ENCODE measurements at regions of chr12 and their contacts with region 1.

Region 1: DNA sequence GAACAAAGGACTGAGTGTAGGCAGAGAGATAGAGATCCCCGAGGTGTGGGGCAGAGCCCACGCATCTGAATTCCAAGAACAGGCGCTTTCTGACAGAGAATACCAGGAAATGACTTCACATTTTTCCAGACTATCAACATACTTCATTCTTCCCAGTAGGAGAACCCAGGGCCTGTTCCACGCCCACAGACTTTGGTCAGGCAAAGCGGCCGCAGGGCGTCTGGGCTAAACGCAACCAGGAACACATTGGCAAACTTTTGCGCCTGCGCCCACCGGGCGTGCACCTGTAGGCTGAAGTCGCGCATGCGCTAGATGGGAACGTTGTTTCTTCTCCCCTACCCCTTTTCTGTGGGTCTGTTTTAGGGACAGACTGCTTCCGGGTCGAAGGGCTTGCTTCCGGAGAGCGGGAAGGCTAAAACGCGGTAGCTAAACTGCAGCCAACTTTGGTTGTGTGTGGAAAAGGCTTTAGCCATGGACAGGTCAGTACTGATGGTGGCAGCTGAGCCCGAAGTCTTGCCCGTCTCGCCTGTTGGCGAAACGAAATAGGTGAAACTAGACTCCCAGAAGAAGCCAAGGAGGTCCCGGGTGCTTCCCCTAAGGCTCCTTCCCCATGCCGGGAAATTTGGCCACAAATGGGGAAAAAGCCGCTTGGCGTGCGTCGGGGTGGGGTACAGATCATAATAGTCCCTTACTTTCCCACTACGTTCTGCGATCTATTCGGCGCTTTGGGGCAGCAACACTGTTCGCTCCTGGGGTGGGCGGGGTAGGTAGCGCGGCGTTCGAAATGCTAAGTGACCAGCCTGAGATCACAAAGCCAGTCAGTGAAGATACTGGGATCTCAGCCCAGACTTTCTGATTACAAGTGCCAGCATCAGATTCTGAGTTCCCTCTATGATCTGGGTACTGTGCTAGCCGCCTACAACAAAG is at the start of gene NUP107:
- DNase-seq: peak; percentile 94
- H3K4me3 Mint-ChIP-seq: peak within 1 kb of the TSS; percentile 93
- H3K27ac Mint-ChIP-seq: peak within 1 kb of the TSS; percentile 93
- H3K4me1 Mint-ChIP-seq: peaks cover 31% of the 10 kb centered on the region
- H3K27me3 Mint-ChIP-seq: no peaks in the 10 kb centered on the region
- total RNA-seq, gene NUP107: 101 and 106 TPM in 2 replicates

Region 2: DNA sequence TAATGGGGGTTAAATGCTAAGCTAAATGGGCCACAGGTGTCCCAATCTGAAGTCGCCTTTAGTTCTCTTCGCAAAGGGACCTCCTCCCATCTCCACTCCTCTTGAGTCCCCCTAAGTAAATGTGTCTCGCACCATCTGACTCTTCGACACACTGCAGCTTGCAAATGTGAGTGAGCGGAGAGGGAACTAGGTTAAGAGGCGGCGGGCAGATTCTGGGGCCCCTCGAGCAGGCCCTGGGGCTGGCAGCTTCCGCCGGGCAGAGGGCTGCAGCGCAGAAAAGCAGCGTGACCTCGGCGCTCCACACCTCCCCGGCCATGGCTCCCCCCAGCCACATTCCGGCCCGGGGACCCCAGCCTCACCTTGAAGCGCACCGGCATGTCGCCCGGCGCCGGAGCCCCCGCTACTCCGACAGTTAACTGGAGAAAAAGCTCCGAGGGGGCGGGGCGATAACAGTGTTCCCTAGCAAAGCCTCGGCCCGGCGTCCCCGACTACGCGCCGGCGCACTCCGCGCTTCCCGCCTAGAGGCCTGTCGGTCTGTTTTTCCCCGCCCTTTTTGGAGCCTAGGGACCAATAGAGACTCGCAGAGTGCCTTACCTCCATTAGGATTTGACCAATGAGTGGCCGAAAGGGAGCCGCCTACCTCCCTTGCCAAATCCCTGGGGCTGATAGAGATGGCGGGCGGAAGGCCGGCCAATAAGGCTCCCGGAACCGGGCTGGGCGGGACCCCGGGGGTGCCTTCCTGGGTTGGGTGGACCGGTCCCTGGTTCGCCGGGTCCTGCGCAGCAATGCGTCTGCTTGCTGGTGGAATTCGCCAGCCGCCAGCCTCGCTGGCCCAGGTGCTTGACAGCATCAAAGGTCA is 354.8 kb before region 1 on chr12 and contains the start of gene MDM1:
- intact Hi-C with region 1: loop called (anchors 2 kb)
- DNase-seq: peak; percentile 95
- H3K4me3 Mint-ChIP-seq: peak within 1 kb of the TSS; percentile 87
- H3K27ac Mint-ChIP-seq: peak within 1 kb of the TSS; percentile 36
- H3K4me1 Mint-ChIP-seq: peaks cover 29% of the 10 kb centered on the region
- H3K27me3 Mint-ChIP-seq: peaks cover 7% of the 10 kb centered on the region
- total RNA-seq, gene MDM1: 13.1 and 14.8 TPM in 2 replicates

Region 3: GRCh38 chr12:68364893-68365725 is 321.7 kb before region 1 on chr12:
- intact Hi-C with region 1: loop called (anchors 1 kb)
- DNase-seq: peak; percentile 85
- H3K4me3 Mint-ChIP-seq: peak overlapping the region; percentile 61
- H3K27ac Mint-ChIP-seq: peak overlapping the region; percentile 84
- H3K4me1 Mint-ChIP-seq: peaks cover 42% of the 10 kb centered on the region
- H3K27me3 Mint-ChIP-seq: no peaks in the 10 kb centered on the region

Region 4: DNA sequence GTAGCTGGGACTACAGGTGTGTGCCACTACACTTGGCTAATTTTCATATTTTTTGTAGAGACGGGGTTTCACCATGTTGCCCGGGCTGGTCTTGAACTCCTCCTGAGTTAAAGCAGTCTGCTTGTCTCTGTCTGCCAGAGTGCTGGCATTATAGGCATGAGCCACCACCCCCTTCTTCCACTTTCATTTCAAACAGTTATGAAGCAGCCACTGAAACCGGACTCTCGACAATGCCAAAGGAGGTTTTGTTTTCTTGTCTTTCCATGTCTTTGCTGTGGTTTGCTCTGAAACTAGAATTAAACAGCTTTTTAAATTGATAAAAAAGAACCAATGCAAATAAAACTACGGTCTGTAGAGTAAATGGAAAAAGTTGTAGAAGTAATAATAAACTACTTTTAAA is 45.7 kb before region 1 on chr12:
- intact Hi-C with region 1: loop called (anchors 5 kb)
- DNase-seq: peak; percentile 48
- H3K4me3 Mint-ChIP-seq: peak overlapping the region; percentile 6
- H3K27ac Mint-ChIP-seq: peak overlapping the region; percentile 28
- H3K4me1 Mint-ChIP-seq: peaks cover 57% of the 10 kb centered on the region
- H3K27me3 Mint-ChIP-seq: no peaks in the 10 kb centered on the region

Region 5: GRCh38 chr12:68675101-68675842 is 11.6 kb before region 1 on chr12:
- intact Hi-C with region 1: loop called (anchors 1 kb)
- DNase-seq: peak; percentile 59
- H3K4me3 Mint-ChIP-seq: peak overlapping the region; percentile 55
- H3K27ac Mint-ChIP-seq: peak overlapping the region; percentile 81
- H3K4me1 Mint-ChIP-seq: peaks cover 39% of the 10 kb centered on the region
- H3K27me3 Mint-ChIP-seq: no peaks in the 10 kb centered on the region

Region 6: DNA sequence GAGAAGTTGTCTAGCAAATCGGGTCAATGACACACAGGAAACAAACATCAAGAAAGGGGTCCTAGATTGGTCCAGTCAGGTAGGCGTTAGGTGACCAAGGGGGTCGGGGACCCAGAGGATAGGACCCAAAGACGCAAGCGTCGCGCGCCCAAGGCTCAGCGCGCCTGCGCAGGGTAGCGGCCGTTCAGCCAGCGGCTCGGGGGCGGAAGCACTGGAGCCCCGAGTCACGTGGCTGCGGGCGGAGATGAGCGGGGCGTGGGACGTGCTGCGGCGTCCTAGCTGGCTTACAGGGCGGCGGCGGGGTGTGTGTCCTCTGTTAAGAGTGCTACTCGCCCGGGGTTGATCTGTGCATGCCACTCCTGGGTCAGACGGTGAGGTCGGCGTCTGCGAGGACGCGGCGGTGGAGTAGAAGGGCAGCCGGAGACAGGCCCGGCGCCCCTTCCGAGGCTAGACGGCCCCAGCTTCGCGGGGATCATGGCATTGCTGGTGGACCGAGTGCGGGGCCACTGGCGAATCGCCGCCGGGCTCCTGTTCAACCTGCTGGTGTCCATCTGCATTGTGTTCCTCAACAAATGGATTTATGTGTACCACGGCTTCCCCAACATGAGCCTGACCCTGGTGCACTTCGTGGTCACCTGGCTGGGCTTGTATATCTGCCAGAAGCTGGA is 59.2 kb after region 1 on chr12 and contains the start of gene SLC35E3:
- intact Hi-C with region 1: loop called (anchors 2 kb)
- DNase-seq: peak; percentile 91
- H3K4me3 Mint-ChIP-seq: peak within 1 kb of the TSS; percentile 92
- H3K27ac Mint-ChIP-seq: peak within 1 kb of the TSS; percentile 88
- H3K4me1 Mint-ChIP-seq: peaks cover 35% of the 10 kb centered on the region
- H3K27me3 Mint-ChIP-seq: no peaks in the 10 kb centered on the region
- total RNA-seq, gene SLC35E3: 6.3 and 9.4 TPM in 2 replicates

Measured in activated T-helper 2 cell treated with anti-CD3 and anti-CD28 coated beads, Interferon-gamma antibody, Interleukin-2, Interleukin-4, amounts not matched to agents 10 μg/mL and 5 μg/mL and 100 μg/mL, durations not matched to agents 14 hours and 24 hours and 36 hours (primary cell).